CD4-positive, alpha-beta T cell (primary cell): ENCODE measurements at regions of chr20 and their contacts with region 1.

Region 1: GRCh38 chr20:44960103-44960852 is at the start of gene TOMM34:
- DNase-seq: peak; percentile 89 to 98 (median 94)
- ATAC-seq: peak; percentile 97
- H3K4me3 ChIP-seq: peak within 1 kb of the TSS; percentile 78
- H3K4me3 Mint-ChIP-seq: peak within 1 kb of the TSS; percentile 98
- H3K27ac ChIP-seq: peak within 1 kb of the TSS; percentile 41 to 66
- H3K27ac Mint-ChIP-seq: peak within 1 kb of the TSS; percentile 81
- H3K4me1 ChIP-seq: peaks cover 35% of the 10 kb centered on the region
- H3K4me1 Mint-ChIP-seq: peaks cover 52% of the 10 kb centered on the region
- H3K27me3 ChIP-seq: no peaks in the 10 kb centered on the region
- H3K27me3 Mint-ChIP-seq: no peaks in the 10 kb centered on the region
- CTCF ChIP-seq: no peak
- total RNA-seq, gene TOMM34: 5.6 to 5.9 TPM

Region 2: DNA sequence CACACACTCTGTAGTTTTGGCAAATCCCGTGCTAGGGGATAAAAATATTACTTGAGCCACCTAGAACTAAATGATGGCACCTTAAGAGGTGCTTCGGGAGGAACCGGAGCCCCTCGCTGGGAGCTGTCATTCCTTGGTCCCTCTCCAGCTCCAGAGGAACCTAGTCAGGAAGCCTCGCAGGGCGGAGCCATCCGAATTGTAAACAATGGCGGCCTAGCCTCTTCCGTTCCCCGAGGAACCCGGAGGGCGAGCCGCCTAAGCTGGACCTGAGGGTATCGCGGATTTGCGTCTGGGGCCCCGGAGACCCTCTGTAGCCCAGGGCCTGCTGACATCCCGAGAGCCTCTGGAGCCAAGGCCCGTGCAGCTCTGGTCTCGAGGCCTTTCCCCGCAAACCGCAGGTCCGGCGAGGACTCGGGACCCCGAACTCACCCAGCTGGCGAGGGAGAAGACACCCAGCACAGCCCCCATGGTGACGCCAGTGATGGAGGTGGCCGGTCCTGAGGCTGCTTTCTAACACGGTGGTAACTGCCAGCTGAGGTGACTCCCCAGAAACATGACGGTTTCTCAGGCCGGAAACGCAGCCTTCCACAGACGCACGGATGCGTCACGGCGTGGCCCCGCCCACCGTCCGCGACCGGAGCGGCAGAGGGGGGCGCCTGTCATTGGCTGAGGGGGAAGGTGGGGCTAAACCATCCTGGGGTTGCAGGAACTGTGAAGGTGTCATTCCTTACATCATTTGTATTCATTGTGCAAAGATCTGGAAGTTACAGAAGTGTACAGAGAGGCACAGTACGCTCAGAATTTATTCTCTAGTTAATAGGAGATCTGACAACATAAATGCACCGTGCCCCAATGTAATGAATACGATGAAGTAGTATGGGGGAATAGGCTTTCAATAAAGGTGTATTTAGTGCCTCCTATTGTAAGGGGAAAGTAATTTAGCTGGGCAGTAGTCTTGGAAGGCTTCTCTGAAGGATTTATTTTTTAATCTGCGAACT is 438.5 kb before region 1 on chr20 and contains the start of gene SERINC3:
- CTCF ChIA-PET with region 1: no interaction called
- POLR2A ChIA-PET with region 1: no interaction called
- intact Hi-C with region 1: loop called in 1 of 2 experiments (anchors 5 kb)
- DNase-seq: peak; percentile 90 to 99 (median 97)
- ATAC-seq: peak; percentile 93
- H3K4me3 ChIP-seq: peak within 1 kb of the TSS; percentile 98
- H3K4me3 Mint-ChIP-seq: peak within 1 kb of the TSS; percentile 89
- H3K27ac ChIP-seq: peak within 1 kb of the TSS; percentile 95 to 99
- H3K27ac Mint-ChIP-seq: peak within 1 kb of the TSS; percentile 93
- H3K4me1 ChIP-seq: peaks cover 44% of the 10 kb centered on the region
- H3K4me1 Mint-ChIP-seq: peaks cover 58% of the 10 kb centered on the region
- H3K27me3 ChIP-seq: no peaks in the 10 kb centered on the region
- H3K27me3 Mint-ChIP-seq: no peaks in the 10 kb centered on the region
- CTCF ChIP-seq: peak; percentile 46
- total RNA-seq, gene SERINC3: 39.5 to 40.2 TPM

Region 3: GRCh38 chr20:44909872-44910689 is 50.2 kb before region 1 on chr20 and contains the start of gene PABPC1L:
- CTCF ChIA-PET with region 1: no interaction called
- POLR2A ChIA-PET with region 1: interaction called, 4 read pairs
- intact Hi-C with region 1: loop called in 1 of 2 experiments (anchors 5 kb)
- DNase-seq: peak; percentile 33 to 88 (median 74)
- ATAC-seq: peak; percentile 95
- H3K4me3 ChIP-seq: peak within 1 kb of the TSS; percentile 86
- H3K4me3 Mint-ChIP-seq: peak within 1 kb of the TSS; percentile 85
- H3K27ac ChIP-seq: peak within 1 kb of the TSS in 1 of 2 donors; percentile 17
- H3K27ac Mint-ChIP-seq: peak within 1 kb of the TSS; percentile 68
- H3K4me1 ChIP-seq: peaks cover 22% of the 10 kb centered on the region
- H3K4me1 Mint-ChIP-seq: peaks cover 36% of the 10 kb centered on the region
- H3K27me3 ChIP-seq: no peaks in the 10 kb centered on the region
- H3K27me3 Mint-ChIP-seq: no peaks in the 10 kb centered on the region
- CTCF ChIP-seq: no peak
- total RNA-seq, gene PABPC1L: 22.8 to 27.5 TPM

Region 4: DNA sequence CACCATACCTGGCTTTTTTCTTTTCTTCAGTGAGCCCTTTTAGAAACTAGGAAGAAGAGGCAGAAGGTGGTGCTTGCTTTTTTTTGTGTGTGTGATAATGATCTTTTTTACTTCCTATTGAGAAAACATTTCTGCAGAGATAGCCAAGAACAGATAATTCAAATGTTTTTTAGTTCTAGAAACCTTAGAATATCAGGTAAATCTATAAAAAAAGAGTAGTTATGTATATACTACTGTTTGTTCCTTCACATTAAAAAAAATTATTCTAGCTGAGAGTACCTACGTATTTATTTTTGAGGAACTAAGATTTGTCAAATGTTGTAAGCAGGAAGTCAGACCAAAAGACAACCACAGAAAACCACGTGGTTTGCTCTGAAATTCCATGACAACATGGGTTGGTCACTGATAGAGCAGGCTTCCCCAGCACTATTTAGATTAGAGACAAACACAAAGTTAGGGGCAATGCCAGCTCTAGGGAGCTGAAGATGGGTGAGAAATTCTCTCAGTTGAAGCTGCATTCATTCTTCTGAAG is 18.9 kb after region 1 on chr20:
- CTCF ChIA-PET with region 1: interaction called, 31 read pairs
- POLR2A ChIA-PET with region 1: interaction called, 180 read pairs
- intact Hi-C with region 1: no loop called
- DNase-seq: peak in 13 of 14 experiments; percentile 35 to 94 (median 49)
- ATAC-seq: peak; percentile 85
- H3K4me3 ChIP-seq: peak overlapping the region; percentile 34
- H3K4me3 Mint-ChIP-seq: peak overlapping the region; percentile 83
- H3K27ac ChIP-seq: peak overlapping the region; percentile 90 to 95
- H3K27ac Mint-ChIP-seq: peak overlapping the region; percentile 96
- H3K4me1 ChIP-seq: peaks cover 56% of the 10 kb centered on the region
- H3K4me1 Mint-ChIP-seq: peaks cover 93% of the 10 kb centered on the region
- H3K27me3 ChIP-seq: no peaks in the 10 kb centered on the region
- H3K27me3 Mint-ChIP-seq: no peaks in the 10 kb centered on the region
- CTCF ChIP-seq: no peak

Region 5: GRCh38 chr20:44990425-44990824 is 30.1 kb after region 1 on chr20:
- CTCF ChIA-PET with region 1: interaction called, 12 read pairs
- POLR2A ChIA-PET with region 1: interaction called, 7 read pairs
- intact Hi-C with region 1: loop called (anchors 5 kb)
- DNase-seq: peak in 4 of 14 experiments; percentile 22 to 46 (median 27)
- ATAC-seq: peak; percentile 50
- H3K4me3 ChIP-seq: peak overlapping the region; percentile 45
- H3K4me3 Mint-ChIP-seq: peak overlapping the region; percentile 88
- H3K27ac ChIP-seq: peak overlapping the region; percentile 62 to 66
- H3K27ac Mint-ChIP-seq: peak overlapping the region; percentile 88
- H3K4me1 ChIP-seq: peaks cover 41% of the 10 kb centered on the region
- H3K4me1 Mint-ChIP-seq: peaks cover 82% of the 10 kb centered on the region
- H3K27me3 ChIP-seq: no peaks in the 10 kb centered on the region
- H3K27me3 Mint-ChIP-seq: no peaks in the 10 kb centered on the region
- CTCF ChIP-seq: no peak

Region 6: GRCh38 chr20:44997171-44998067 is 37.1 kb after region 1 on chr20:
- CTCF ChIA-PET with region 1: interaction called, 12 read pairs
- POLR2A ChIA-PET with region 1: no interaction called
- intact Hi-C with region 1: loop called (anchors 5 kb)
- DNase-seq: no peak
- ATAC-seq: no peak
- H3K4me3 ChIP-seq: no peak overlapping the region
- H3K4me3 Mint-ChIP-seq: peak overlapping the region; percentile 4
- H3K27ac ChIP-seq: no peak overlapping the region
- H3K27ac Mint-ChIP-seq: peak overlapping the region; percentile 1
- H3K4me1 ChIP-seq: peaks cover 22% of the 10 kb centered on the region
- H3K4me1 Mint-ChIP-seq: peaks cover 89% of the 10 kb centered on the region
- H3K27me3 ChIP-seq: no peaks in the 10 kb centered on the region
- H3K27me3 Mint-ChIP-seq: no peaks in the 10 kb centered on the region
- CTCF ChIP-seq: no peak